KBM-7 (cell line): ENCODE measurements at regions of chr12 and their contacts with region 1.

Region 1: DNA sequence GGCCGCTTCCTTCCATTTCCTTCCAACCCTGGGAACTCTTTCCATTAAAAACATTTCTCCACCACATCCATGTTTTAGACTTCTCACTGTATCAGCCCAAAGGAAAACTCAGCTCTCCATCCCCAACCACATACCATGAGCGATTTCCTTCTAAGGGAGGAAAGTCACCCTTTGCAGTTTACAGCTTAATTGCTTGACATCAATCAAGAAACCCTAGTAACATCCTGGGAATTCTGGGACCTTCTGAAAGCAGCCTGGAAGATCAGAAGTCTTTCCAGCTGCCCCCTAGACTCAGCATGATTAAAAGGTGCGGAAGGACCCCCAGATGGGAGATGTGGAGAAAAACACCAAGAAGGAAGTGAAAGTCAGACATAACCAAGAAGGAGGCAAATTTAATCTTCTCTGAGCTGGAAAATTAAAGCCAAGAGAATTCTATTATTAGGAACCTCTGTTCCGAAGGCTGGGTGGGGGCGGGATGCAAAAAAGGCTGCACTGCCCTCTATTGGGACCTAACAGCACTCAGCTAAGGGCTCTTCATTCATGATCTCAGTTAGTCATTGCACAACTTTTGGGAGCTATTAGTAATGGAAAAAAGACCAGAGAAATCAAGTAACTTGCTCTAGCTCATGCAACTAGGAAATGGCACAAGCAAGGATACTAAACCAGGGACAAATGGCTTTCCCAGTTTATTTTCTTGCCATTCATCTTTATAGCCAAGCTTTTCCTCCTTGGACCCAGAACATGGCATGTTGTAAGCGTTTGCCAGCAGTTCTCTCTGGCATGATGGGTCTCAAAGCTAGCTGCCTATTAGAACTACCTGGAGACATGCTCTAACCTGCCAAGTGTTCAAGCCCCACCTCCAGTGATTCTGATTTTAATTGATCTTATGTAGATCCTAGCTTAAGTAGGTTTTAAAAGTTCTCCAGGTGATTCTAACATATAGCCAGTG is 73.1 kb upstream of the PLXNC1 start:
- DNase-seq: peak; percentile 56

Region 2: DNA sequence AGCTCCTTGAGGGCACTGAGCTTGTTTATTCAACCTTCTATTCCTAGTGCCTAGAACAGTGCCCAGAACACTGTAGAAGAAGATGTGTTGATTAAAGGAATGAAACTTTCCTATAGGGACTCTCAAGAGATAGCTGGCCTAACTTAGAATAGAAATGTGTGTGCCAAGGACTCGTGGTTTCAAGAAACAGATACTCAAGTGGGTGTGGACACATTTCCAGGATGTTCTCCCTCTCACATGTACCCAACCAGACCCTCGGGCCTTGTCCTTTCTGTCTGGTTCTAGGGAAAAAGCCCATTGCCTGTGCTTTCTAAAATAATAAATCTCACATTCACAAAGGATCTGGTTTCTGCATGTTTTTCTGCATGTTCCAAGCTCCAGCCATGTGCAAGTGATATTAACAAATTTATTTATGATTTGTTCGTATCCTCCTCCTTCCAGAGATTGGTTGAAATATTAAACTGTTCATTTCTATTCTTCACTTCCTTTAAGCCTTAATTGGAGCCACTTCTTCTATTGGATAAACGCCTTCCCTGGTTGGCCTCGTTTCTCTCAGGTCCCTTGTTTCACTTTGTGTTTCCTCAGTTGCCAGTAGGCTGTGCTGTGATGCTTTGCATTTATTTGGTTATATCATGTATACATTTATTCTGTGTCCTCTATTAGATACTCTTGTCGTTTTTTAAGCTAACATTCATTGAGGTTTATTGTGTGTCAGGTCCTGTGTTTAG is 308.3 kb before region 1 on chr12:
- in situ Hi-C with region 1: loop called (anchors 25 kb)
- DNase-seq: peak; percentile 75